HEK293T (cell line): ENCODE measurements at regions of chr17 and their contacts with region 1.

Region 1: GRCh38 chr17:74873038-74873873 is 462 bp upstream of the FDXR start:
- DNase-seq: peak; percentile 99

Region 2: DNA sequence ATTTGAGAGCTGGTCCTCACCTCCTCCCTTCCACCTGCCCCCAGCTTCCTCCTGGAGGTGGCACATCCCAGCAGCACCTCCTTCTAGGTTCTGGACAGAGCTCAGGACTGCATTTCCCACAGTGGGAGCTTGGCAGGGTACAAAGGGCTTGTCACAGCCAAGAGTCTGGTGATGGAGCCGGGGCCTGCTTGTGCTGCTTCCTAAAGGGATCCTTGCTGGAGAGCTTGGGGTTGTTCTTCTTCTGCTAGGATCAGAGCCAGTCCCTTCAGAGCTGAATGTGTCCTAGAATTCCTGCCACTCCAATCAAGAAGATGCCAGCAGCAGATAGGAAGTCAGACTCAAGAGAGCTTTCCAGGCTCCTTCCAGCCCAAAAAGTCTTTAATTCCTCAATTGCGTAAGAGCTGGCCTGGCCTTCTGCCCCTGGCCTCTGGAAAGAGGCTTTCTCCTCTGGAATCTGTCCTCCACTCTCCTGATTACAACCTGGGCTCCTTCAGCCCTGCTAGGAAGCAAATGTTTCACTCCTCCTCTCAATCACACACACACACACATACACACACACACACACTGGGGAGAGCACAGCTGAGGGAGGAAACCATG is 254.1 kb before region 1 on chr17:
- CTCF ChIA-PET with region 1: no interaction called
- POLR2A ChIA-PET with region 1: no interaction called
- DNase-seq: no peak

Region 3: GRCh38 chr17:74748529-74749365 is 124.5 kb before region 1 on chr17 and contains the start of gene NHERF1:
- CTCF ChIA-PET with region 1: interaction called, 3 read pairs
- POLR2A ChIA-PET with region 1: interaction called, 12 read pairs
- DNase-seq: peak; percentile 98

Region 4: GRCh38 chr17:74842599-74843351 is 30.5 kb before region 1 on chr17:
- CTCF ChIA-PET with region 1: interaction called, 6 read pairs
- POLR2A ChIA-PET with region 1: interaction called, 21 read pairs
- DNase-seq: peak; percentile 89

Region 5: GRCh38 chr17:74892974-74893911 is 20.0 kb after region 1 on chr17 and contains the start of gene FADS6:
- CTCF ChIA-PET with region 1: interaction called, 3 read pairs
- POLR2A ChIA-PET with region 1: interaction called, 24 read pairs
- DNase-seq: no peak

Region 6: DNA sequence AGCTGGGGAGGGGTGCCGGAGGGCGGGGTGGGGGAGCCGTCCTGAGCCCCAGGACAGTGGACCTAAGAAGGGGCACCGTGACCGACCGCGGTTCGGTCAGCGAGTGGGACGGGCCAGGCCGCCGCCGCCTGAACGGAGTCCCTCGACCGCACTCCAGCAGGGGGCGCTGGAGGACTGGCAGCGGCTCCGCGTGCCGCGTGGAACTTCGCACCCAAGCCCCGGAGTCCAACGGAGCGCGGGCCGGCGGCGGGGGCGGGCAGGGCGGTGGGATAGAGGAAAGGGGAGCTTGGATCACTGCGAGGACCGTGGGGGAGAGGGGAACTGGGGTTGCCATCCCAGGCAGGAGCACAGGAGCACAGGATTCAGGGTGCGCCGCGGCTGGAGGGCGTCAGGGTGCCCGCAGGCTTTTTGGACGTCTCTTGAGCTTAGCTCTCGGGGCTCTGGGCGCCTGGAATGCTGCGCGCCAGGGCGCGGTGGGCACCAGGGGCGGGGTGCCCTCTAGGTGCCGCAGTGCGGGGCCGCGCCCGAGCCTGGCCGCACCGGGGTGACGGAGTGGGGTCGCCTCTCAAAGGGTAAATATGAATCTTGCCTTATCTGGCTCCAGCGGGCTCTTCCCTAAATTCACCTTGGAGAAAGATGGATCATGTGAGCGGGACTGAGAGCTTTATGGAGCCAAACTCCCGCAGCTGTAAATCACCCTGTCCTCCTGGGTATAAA is 50.4 kb after region 1 on chr17:
- CTCF ChIA-PET with region 1: interaction called, 4 read pairs
- POLR2A ChIA-PET with region 1: interaction called, 11 read pairs
- DNase-seq: peak; percentile 95

Region 7: GRCh38 chr17:74981979-74982662 is 108.9 kb after region 1 on chr17:
- CTCF ChIA-PET with region 1: no interaction called
- POLR2A ChIA-PET with region 1: interaction called, 12 read pairs
- DNase-seq: peak; percentile 89

Region 8: DNA sequence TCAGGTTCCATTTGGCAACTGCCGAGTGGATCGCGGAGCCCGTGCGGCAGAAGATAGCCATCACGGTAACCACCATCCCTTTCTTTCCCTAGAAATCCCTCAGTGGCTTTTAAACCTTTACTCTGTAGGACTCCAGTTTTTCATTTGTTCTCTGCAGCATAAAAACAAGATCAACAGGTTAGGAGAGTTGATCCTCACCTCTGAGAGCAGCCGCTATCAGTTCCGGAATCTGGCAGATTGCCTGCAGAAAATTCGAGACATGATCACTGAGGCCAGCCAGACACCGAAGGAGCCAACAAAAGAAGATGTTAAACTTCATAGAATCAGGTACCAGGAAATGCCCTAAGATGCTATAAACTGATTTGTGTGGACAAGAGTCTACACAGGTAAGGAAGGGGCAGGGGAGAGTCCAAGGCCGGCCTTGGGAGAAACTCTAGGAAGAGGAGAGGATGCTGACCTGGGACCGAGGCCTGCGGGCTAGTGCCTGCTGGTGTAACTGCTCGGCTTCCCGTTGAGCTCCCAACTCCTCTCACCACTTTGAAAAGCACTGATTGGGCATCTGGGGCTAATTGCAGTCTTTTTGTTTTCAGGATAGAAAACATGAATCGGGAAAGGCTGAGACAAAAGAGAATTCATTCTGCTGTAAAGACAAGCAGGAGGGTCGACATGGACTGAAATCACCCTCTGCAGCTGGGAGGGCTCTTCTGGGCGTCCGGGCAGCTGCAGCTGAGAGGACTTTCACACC is 147.2 kb after region 1 on chr17:
- CTCF ChIA-PET with region 1: no interaction called
- POLR2A ChIA-PET with region 1: no interaction called
- DNase-seq: no peak

Region 9: DNA sequence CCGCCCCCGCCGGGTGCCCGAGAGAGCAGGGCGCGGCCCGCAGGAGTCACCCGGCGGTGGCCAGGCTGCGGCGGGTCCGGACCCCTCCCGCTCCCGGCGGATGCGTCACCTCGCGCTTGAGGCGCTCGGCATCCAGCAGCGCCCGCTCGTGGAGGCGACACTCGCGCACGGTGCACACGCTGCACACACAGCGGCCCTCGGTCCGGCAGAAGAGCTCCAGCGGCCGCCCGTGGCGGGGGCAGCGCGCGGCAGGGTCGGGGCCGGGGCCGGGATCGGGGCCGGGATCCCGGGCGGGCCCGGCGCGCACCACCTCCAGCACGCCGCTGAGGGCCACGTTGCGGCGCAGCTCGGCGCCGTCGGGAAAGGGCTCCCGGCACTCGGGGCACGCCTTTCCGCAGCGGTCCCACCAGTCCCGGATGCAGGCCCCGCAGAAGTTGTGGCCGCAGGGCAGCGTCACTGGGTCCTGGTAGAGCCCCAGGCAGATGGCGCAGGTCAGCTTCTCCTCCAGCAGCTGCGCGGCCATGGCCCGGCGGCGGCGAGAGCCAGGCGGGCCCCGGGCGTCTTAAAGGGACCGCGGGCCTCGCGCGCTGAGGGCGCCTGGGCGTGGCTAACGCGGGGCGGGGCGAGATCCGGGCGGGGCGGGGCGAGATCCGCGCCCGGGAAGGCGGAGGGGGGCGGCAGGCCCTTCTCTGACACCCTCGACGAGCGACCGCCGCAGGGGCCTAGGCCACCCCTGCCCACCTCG is 1023.3 kb after region 1 on chr17 and contains the start of gene TRIM65:
- CTCF ChIA-PET with region 1: no interaction called
- POLR2A ChIA-PET with region 1: no interaction called
- DNase-seq: peak; percentile 88